Transverse colon (tissue), 4 donors: ENCODE measurements at regions of chr9 and their contacts with region 1.

Region 1: GRCh38 chr9:87516222-87516925 is 18.7 kb downstream of the DAPK1 start:
- DNase-seq: peak; percentile 34
- H3K4me3 ChIP-seq: no peak overlapping the region
- H3K27ac ChIP-seq: peak overlapping the region; percentile 32 to 62 (median 49)
- H3K4me1 ChIP-seq: peaks cover 4 to 58% (median 12%) of the 10 kb centered on the region in 4 donors
- H3K27me3 ChIP-seq: no peaks in the 10 kb centered on the region
- CTCF ChIP-seq: no peak
- EP300 ChIP-seq: no peak
- POLR2A ChIP-seq: no peak

Region 2: GRCh38 chr9:86585422-86586143 is 930.8 kb before region 1 on chr9:
- in situ Hi-C with region 1: no loop called
- intact Hi-C with region 1: no loop called
- DNase-seq: no peak
- H3K4me3 ChIP-seq: peak overlapping the region in 2 of 4 donors; percentile 11 to 29
- H3K27ac ChIP-seq: peak overlapping the region; percentile 21 to 71 (median 48)
- H3K4me1 ChIP-seq: peaks cover 0 to 8% (median 0%) of the 10 kb centered on the region in 4 donors
- H3K27me3 ChIP-seq: no peaks in the 10 kb centered on the region
- CTCF ChIP-seq: no peak
- EP300 ChIP-seq: no peak
- POLR2A ChIP-seq: no peak

Region 3: DNA sequence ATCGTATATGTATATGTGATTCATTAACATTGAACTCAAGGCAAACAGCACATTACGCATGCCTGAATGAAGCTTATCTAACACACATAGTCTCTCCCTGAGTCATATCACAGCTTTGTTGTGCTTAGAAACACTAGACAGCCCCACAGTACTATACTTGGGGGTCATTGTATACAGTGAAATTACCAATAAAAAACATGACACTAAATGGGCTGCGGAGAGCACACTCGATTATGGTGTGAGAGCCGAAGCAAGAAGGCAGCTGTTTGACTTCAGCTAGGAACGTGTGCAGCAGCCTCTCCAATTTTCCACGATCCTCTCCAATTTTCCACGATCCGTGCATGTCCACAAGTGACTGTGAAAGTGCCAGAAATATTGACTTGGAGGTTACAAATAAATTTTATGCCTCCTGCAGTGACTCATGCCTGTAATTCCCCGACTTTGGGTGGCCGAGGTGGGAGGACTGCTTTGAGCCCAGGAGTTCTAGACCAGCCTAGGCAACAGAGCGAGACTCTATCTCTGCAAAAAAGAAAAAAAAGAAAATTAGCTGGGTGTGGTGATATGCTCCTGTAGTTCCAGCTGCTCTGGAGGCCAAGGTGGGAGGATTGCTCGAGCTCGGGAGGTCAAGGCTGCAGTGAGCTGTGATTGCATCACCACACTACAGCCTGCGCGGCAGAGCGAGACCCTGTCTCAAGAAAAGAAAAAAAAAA is 83.7 kb after region 1 on chr9:
- in situ Hi-C with region 1: loop called in 1 of 4 experiments (anchors 25 kb)
- intact Hi-C with region 1: no loop called
- DNase-seq: no peak
- H3K4me3 ChIP-seq: no peak overlapping the region
- H3K27ac ChIP-seq: peak overlapping the region; percentile 63 to 77 (median 72)
- H3K4me1 ChIP-seq: peaks cover 32 to 67% (median 46%) of the 10 kb centered on the region in 4 donors
- H3K27me3 ChIP-seq: no peaks in the 10 kb centered on the region
- CTCF ChIP-seq: no peak
- EP300 ChIP-seq: no peak
- POLR2A ChIP-seq: no peak

Region 4: GRCh38 chr9:87878989-87879511 is 362.7 kb after region 1 on chr9:
- in situ Hi-C with region 1: no loop called
- intact Hi-C with region 1: no loop called
- DNase-seq: no peak
- H3K4me3 ChIP-seq: no peak overlapping the region
- H3K27ac ChIP-seq: peak overlapping the region in 3 of 4 donors; percentile 13 to 25 (median 23)
- H3K4me1 ChIP-seq: peaks cover 0 to 27% (median 9%) of the 10 kb centered on the region in 4 donors
- H3K27me3 ChIP-seq: no peaks in the 10 kb centered on the region
- CTCF ChIP-seq: no peak
- EP300 ChIP-seq: no peak
- POLR2A ChIP-seq: no peak